Sigmoid colon (tissue), 7 donors: ENCODE measurements at regions of chr7 and their contacts with region 1.

Region 1: DNA sequence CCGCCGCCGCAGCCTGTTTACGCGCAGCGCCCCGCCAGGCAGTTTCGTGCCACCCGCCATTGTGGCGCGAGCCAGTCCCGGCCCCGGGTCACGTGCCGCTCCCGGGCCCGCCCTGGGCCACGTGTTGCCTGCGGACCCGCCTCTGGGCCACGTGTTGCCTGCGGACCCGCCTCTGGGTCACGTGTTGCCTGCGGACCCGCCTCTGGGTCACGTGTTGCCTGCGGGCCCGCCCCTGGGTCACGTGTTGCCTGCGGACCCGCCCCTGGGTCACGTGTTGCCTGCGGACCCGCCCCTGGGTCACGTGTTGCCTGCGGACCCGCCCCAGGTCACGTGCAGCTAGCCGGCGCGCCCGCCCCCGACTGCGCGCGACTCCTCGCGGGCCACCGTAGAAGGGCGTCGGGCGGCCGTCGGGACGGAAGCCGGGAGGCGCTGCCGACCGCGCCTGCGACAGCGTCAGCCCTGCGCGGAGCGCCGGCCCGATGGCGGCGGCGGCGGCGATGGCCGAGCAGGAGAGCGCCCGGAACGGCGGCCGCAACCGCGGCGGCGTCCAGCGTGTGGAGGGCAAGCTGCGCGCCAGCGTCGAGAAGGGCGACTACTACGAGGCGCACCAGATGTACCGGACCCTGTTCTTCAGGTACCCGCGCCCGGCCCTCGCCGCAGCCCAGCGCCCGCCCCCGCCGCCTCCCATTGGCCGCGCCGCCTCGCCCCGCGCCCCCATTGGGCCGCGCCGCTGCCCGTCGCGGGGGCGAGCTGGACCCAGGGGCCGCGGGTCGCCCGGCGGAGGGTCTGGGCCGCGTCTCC is at the start of gene GET4:
- DNase-seq: peak; percentile 99
- H3K4me3 ChIP-seq: peak within 1 kb of the TSS; percentile 85 to 92 (median 88)
- H3K27ac ChIP-seq: peak within 1 kb of the TSS; percentile 89 to 95 (median 90)
- H3K4me1 ChIP-seq: peaks cover 0 to 77% (median 69%) of the 10 kb centered on the region in 4 donors
- H3K27me3 ChIP-seq: no peaks in the 10 kb centered on the region
- CTCF ChIP-seq: peak in 1 of 4 experiments; percentile 7
- EP300 ChIP-seq: no peak
- POLR2A ChIP-seq: peak in 1 of 2 donors; percentile 52
- total RNA-seq, gene GET4: 20.3 to 32.4 (median 25.4) TPM

Region 2: GRCh38 chr7:322111-322671 is 554.2 kb before region 1 on chr7:
- intact Hi-C with region 1: loop called (anchors 10 kb)
- DNase-seq: no peak
- H3K4me3 ChIP-seq: peak overlapping the region in 2 of 4 donors; percentile 7 to 24
- H3K27ac ChIP-seq: peak overlapping the region in 3 of 4 donors; percentile 4 to 51 (median 6)
- H3K4me1 ChIP-seq: peaks cover 0 to 9% (median 7%) of the 10 kb centered on the region in 4 donors
- H3K27me3 ChIP-seq: peaks cover 0 to 4% (median 3%) of the 10 kb centered on the region in 3 donors
- CTCF ChIP-seq: peak; percentile 77 to 98 (median 84)
- EP300 ChIP-seq: no peak
- POLR2A ChIP-seq: no peak

Region 3: DNA sequence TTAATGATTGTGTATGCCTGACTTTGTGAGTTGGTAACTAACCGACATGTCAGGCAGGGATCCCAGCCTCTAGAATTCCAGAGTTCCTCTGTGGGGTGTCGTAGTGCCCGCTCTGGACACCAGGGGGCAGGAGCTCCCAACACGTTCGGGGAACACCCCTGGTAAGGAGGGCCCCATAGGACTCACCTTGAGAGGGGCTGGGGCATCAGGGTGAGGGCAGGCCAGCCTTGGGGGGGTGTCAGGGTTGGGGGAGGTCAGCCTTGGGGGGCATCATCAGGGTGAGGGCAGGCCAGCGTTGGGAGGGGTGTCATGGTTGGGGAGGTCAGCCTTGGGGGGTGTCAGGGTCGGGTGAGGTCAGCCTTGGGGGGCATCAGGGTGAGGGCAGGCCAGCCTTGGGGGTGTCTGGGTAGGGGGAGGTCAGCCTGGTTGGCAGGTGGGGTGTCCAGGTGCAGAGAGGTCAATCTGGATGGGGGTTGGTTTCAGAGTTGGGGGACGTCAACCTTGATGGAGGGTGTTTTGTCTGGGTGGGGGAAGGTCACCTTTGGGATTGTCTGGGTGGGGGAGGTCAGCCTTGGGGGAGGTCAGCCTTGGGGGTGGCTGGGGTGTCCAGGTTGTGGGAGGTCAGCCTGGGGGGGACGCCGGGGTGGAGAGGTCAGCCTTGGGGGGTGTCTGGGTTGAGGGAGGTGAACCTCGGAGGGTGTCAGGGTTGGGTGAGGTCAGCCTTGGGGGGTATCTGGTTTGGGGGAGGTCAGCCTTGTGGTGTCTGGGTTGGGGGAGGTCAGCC is 89.7 kb before region 1 on chr7:
- intact Hi-C with region 1: loop called (anchors 1 kb)
- DNase-seq: peak; percentile 90
- H3K4me3 ChIP-seq: no peak overlapping the region
- H3K27ac ChIP-seq: peak overlapping the region in 1 of 4 donors; percentile 22
- H3K4me1 ChIP-seq: peaks cover 0 to 28% (median 13%) of the 10 kb centered on the region in 4 donors
- H3K27me3 ChIP-seq: no peaks in the 10 kb centered on the region
- CTCF ChIP-seq: peak; percentile 90 to 93 (median 92)
- EP300 ChIP-seq: no peak
- POLR2A ChIP-seq: no peak

Region 4: GRCh38 chr7:821688-822087 is 54.7 kb before region 1 on chr7:
- intact Hi-C with region 1: loop called (anchors 2 kb)
- DNase-seq: peak; percentile 69
- H3K4me3 ChIP-seq: peak overlapping the region in 1 of 4 donors; percentile 2
- H3K27ac ChIP-seq: peak overlapping the region; percentile 65 to 92 (median 76)
- H3K4me1 ChIP-seq: peaks cover 0 to 92% (median 74%) of the 10 kb centered on the region in 4 donors
- H3K27me3 ChIP-seq: no peaks in the 10 kb centered on the region
- CTCF ChIP-seq: no peak
- EP300 ChIP-seq: peak in 1 of 4 donors; percentile 46
- POLR2A ChIP-seq: no peak

Region 5: DNA sequence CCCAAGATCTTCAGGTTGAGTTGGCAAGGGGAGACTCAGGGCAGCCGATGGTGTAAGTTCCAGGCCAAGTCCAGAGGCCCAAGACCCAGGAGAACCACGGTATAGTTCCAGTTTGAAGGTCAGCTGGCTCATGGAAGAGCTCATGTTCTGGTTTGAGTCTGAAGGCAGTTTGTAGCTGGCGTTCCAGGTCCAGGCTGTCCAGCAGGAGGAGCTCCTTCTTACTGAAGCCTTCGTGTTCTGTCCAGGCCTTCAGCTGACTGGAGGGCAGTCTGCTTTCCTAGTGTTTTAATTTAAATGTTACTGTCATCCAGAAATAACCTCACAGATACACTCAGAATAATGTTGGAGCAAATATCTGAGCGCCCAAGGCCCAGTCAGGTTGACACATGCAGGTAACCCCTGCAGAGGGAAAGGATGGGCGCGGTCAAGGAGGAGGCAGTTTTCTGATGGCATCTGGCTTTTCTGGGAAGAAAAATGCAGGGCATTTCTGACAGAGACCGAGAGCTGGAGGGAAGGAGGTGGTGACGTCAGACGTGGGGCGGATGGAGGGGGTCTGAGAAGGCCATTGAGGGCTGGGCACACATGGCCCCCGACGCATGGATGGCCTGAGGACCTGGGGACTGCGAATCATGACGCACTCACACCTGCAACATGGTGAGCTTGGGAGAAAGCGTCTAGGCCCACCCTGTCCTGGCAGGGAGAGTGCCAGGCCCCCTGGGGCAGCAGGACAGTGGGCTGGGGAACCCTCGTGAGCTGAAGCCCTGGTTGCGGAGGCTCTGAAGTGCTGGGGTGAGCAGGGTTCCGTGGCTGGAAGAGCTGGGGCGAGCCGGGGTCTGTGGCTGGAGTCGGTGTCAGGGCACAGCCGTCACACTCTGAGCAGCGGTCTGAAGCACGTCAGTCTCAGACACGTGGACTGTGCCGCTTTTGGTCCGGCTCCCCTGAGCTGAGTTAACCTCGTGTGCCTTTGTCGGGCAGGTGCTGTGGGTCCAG is 39.7 kb before region 1 on chr7:
- intact Hi-C with region 1: loop called (anchors 2 kb)
- DNase-seq: peak; percentile 76
- H3K4me3 ChIP-seq: no peak overlapping the region
- H3K27ac ChIP-seq: peak overlapping the region; percentile 84 to 92 (median 89)
- H3K4me1 ChIP-seq: peaks cover 0 to 83% (median 68%) of the 10 kb centered on the region in 4 donors
- H3K27me3 ChIP-seq: no peaks in the 10 kb centered on the region
- CTCF ChIP-seq: peak in 3 of 4 experiments; percentile 47 to 49 (median 48)
- EP300 ChIP-seq: no peak
- POLR2A ChIP-seq: no peak

Region 6: GRCh38 chr7:954330-955238 is 78.2 kb after region 1 on chr7 and contains the start of gene ADAP1:
- intact Hi-C with region 1: loop called (anchors 5 kb)
- DNase-seq: peak; percentile 67
- H3K4me3 ChIP-seq: peak within 1 kb of the TSS; percentile 43 to 78 (median 70)
- H3K27ac ChIP-seq: peak within 1 kb of the TSS; percentile 80 to 93 (median 89)
- H3K4me1 ChIP-seq: peaks cover 0 to 36% (median 25%) of the 10 kb centered on the region in 4 donors
- H3K27me3 ChIP-seq: no peaks in the 10 kb centered on the region
- CTCF ChIP-seq: no peak
- EP300 ChIP-seq: no peak
- POLR2A ChIP-seq: no peak
- total RNA-seq, gene ADAP1: 11.4 to 72.6 (median 28.9) TPM